ENCODE measurements at regions of chr19 and their contacts with region 1.

Region 1: GRCh38 chr19:29453596-29453995 is 72.2 kb upstream of the VSTM2B start:
- H3K4me3 ChIP-seq: no peak overlapping the region
- H3K27ac ChIP-seq: no peak overlapping the region
- H3K4me1 ChIP-seq: no peaks in the 10 kb centered on the region
- CTCF ChIP-seq: no peak

Region 2: DNA sequence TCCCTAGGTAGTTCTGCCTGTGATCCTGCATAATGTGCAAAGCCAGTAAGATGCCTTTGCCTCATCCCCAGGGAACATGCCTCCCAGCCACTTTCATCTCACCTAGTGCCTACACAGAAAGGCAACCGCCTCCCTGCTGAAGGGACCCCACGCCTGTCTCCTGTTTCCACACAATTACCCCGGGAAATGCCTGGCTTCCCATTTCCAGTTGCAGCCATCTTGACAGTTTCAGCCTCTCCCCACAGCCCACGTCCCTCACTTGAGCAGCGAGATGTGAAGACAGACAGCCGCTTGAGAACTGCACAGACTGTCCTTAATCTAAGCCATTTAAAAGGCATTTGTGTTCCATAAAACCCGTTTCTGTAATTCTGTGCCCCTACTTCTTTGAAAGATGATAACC is 236.0 kb before region 1 on chr19:
- CTCF ChIA-PET with region 1: no interaction called
- POLR2A ChIA-PET with region 1: no interaction called
- H3K4me3 ChIP-seq: no peak overlapping the region
- H3K27ac ChIP-seq: no peak overlapping the region
- H3K4me1 ChIP-seq: peaks cover 7% of the 10 kb centered on the region
- CTCF ChIP-seq: no peak

Region 3: DNA sequence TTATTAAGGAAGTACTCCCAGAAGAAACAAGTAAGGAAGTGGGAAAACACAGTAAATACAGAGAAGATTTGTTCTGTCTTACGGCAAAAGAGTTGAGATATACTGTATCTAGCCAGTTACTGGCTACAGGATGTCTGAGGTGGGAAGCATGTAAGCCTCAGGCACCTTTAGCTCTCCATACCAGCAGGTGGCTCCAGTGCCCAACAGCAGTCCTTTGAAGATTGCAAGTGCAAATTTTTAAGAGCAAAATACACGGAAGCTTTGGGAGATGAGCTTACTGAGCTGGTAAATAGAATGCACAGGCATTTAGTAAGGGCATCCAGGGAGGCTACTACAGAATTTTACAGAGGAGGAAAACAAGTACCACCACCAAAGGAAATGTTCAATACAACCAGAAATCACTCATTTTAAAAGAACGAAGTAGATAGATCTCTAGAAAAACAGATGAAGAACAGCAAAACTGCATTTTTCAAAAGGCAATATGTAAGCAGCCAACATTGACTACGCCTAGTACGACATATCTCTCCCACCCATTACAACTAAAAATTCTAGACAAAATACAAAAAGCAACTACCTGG is 14.3 kb after region 1 on chr19:
- CTCF ChIA-PET with region 1: interaction called, 28 read pairs
- POLR2A ChIA-PET with region 1: no interaction called
- H3K4me3 ChIP-seq: no peak overlapping the region
- H3K27ac ChIP-seq: no peak overlapping the region
- H3K4me1 ChIP-seq: 0 out of 2 replicates have a peak, but pooled peaks cover 3% of the 10 kb centered on the region
- CTCF ChIP-seq: peak; percentile 85

Region 4: GRCh38 chr19:29596885-29597525 is 143.4 kb after region 1 on chr19:
- CTCF ChIA-PET with region 1: interaction called, 11 read pairs
- POLR2A ChIA-PET with region 1: no interaction called
- H3K4me3 ChIP-seq: no peak overlapping the region
- H3K27ac ChIP-seq: peak overlapping the region; percentile 37; the same call in 1 of the 2 replicates
- H3K4me1 ChIP-seq: peaks cover 21% of the 10 kb centered on the region
- CTCF ChIP-seq: peak; percentile 87

Measured in HEK293 (cell line).